Left ventricle myocardium superior (tissue), 1 donor: ENCODE measurements at regions of chr6 and their contacts with region 1.

Region 1: DNA sequence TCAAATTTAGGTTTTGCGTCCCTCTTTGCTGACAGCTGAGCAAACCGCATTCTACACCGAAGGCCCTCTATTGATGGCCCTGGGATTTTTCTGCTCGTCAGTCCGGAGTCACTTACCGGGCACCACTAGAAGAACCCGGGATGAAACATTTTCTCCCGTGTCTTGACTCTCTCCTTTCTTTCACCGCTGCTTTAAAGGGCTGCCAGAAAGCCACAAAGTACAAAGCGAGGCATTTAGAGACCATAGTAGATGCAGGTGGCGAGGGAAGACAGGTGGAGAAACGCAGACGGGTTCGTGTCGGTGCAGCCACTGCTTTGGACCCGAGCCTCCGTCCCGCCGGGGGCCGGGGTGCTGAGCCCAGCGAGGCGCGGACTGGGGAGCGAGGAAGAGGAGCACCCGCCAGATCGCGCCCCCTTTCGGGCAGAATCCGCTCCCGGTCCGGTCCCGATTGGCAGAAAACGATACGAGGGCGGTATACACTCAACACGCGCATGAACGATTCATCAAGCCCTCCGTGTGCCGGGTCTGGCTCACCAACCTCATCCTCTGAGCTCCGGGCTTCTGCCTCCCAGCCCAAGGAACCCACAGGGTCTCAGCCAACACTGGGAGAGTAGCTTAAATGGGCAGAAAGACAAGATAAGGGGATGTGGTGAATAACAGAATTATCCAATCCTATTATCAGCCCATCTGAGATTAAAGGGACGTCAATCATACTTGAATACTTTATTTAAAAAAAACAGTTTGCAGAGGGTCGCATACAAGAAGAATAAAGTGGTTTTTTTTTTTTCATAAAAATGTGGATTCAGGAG is 84.9 kb downstream of the TRIM27 start:
- DNase-seq: peak; percentile 87
- ATAC-seq: peak; percentile 91

Region 2: GRCh38 chr6:28506807-28507475 is 331.9 kb before region 1 on chr6:
- intact Hi-C with region 1: no loop called
- DNase-seq: no peak
- ATAC-seq: no peak

Region 3: GRCh38 chr6:28586962-28587745 is 251.7 kb before region 1 on chr6:
- intact Hi-C with region 1: no loop called
- DNase-seq: peak; percentile 66
- ATAC-seq: peak; percentile 96

Region 4: GRCh38 chr6:28657769-28658465 is 180.9 kb before region 1 on chr6:
- intact Hi-C with region 1: no loop called
- DNase-seq: peak; percentile 43
- ATAC-seq: peak; percentile 60

Region 5: GRCh38 chr6:28896505-28897368 is 57.9 kb after region 1 on chr6:
- intact Hi-C with region 1: no loop called
- DNase-seq: peak; percentile 71
- ATAC-seq: peak; percentile 52

Region 6: GRCh38 chr6:29016559-29017427 is 178.0 kb after region 1 on chr6:
- intact Hi-C with region 1: loop called (anchors 5 kb)
- DNase-seq: peak; percentile 80
- ATAC-seq: peak; percentile 97